Naive thymus-derived CD4-positive, alpha-beta T cell (primary cell): ENCODE measurements at regions of chr10 and their contacts with region 1.

Region 1: DNA sequence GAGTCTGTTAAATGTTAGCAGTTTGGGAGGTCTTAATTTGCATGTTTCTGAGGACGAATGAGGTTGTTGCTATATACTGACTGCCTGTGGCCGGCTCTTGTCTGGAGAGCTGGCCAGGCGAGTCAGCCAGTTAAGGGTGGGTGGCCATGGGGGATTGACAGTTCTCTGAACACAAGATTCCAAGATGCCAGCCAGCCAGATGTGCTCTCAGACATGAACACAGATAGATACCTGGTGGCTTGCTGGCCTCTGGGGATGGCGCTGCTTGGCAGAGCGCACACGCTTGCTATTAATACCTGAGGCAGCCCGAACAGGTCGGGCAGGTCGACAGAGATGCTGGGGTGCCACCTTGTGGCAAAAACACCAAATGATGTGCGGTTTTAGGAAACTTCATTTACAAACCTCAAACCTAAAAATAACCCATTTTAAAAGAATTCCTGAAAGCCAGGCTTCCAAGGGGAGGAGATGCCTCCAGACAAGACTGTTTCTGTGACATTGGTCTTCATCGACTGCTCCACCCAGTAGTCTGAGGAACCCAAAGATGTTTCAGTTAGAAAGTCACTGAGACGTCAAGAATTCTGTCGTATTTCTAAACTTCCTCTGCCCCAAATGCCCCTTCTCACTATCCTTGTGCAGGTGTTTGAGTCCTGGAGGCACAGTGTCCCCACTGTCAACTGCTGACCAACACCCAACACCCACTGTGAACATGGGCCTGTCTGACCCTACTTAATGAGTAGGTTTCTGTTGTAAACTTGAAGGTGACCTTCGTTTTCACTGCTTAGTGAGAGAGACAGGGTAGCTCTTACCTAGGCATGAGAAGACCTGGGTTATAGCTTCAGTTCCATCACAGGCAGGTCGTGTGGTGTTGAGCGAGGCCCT is 123.4 kb downstream of the NT5C2 start:
- DNase-seq: peak; percentile 48 to 75 (median 68)
- ATAC-seq: peak; percentile 89
- H3K4me3 ChIP-seq: no peak overlapping the region
- H3K4me3 Mint-ChIP-seq: peak overlapping the region in 3 of 10 donors; percentile 21 to 61 (median 33)
- H3K27ac ChIP-seq: no peak overlapping the region
- H3K27ac Mint-ChIP-seq: peak overlapping the region in 6 of 9 donors; percentile 16 to 75 (median 62)
- H3K4me1 ChIP-seq: no peaks in the 10 kb centered on the region
- H3K4me1 Mint-ChIP-seq: peaks cover 16 to 35% (median 23%) of the 10 kb centered on the region in 7 donors
- H3K27me3 ChIP-seq: no peaks in the 10 kb centered on the region
- H3K27me3 Mint-ChIP-seq: no peaks in the 10 kb centered on the region

Region 2: GRCh38 chr10:102729029-102730026 is 340.4 kb before region 1 on chr10:
- CTCF ChIA-PET with region 1: no interaction called
- POLR2A ChIA-PET with region 1: no interaction called
- intact Hi-C with region 1: loop called in 1 of 2 experiments (anchors 5 kb)
- DNase-seq: peak in 7 of 9 donors; percentile 19 to 63 (median 36)
- ATAC-seq: peak; percentile 92
- H3K4me3 ChIP-seq: no peak overlapping the region
- H3K4me3 Mint-ChIP-seq: no peak overlapping the region
- H3K27ac ChIP-seq: peak overlapping the region; percentile 23
- H3K27ac Mint-ChIP-seq: peak overlapping the region in 6 of 9 donors; percentile 1 to 65 (median 56)
- H3K4me1 ChIP-seq: no peaks in the 10 kb centered on the region
- H3K4me1 Mint-ChIP-seq: peaks cover 0 to 16% (median 7%) of the 10 kb centered on the region in 7 donors
- H3K27me3 ChIP-seq: no peaks in the 10 kb centered on the region
- H3K27me3 Mint-ChIP-seq: no peaks in the 10 kb centered on the region

Region 3: GRCh38 chr10:103053659-103054581 is 15.8 kb before region 1 on chr10:
- CTCF ChIA-PET with region 1: no interaction called
- POLR2A ChIA-PET with region 1: interaction called, 3 read pairs
- intact Hi-C with region 1: loop called in 1 of 2 experiments (anchors 1 kb)
- DNase-seq: peak in 8 of 9 donors; percentile 42 to 74 (median 58)
- ATAC-seq: peak; percentile 93
- H3K4me3 ChIP-seq: peak overlapping the region; percentile 37
- H3K4me3 Mint-ChIP-seq: peak overlapping the region; percentile 74 to 88 (median 84)
- H3K27ac ChIP-seq: peak overlapping the region; percentile 46
- H3K27ac Mint-ChIP-seq: peak overlapping the region; percentile 85 to 96 (median 90)
- H3K4me1 ChIP-seq: peaks cover 6 to 15% of the 10 kb centered on the region in 2 donors
- H3K4me1 Mint-ChIP-seq: peaks cover 13 to 21% (median 18%) of the 10 kb centered on the region in 7 donors
- H3K27me3 ChIP-seq: no peaks in the 10 kb centered on the region
- H3K27me3 Mint-ChIP-seq: no peaks in the 10 kb centered on the region

Region 4: GRCh38 chr10:103244663-103245271 is 175.1 kb after region 1 on chr10:
- CTCF ChIA-PET with region 1: no interaction called
- POLR2A ChIA-PET with region 1: no interaction called
- intact Hi-C with region 1: loop called in 1 of 2 experiments (anchors 1 kb)
- DNase-seq: peak; percentile 31 to 67 (median 52)
- ATAC-seq: peak; percentile 79
- H3K4me3 ChIP-seq: no peak overlapping the region
- H3K4me3 Mint-ChIP-seq: no peak overlapping the region
- H3K27ac ChIP-seq: no peak overlapping the region
- H3K27ac Mint-ChIP-seq: no peak overlapping the region
- H3K4me1 ChIP-seq: no peaks in the 10 kb centered on the region
- H3K4me1 Mint-ChIP-seq: peaks cover 3 to 28% (median 6%) of the 10 kb centered on the region in 7 donors
- H3K27me3 ChIP-seq: no peaks in the 10 kb centered on the region
- H3K27me3 Mint-ChIP-seq: peaks cover 0 to 13% (median 7%) of the 10 kb centered on the region in 5 donors